Right lobe of liver (tissue), 6 donors: ENCODE measurements at regions of chr14 and their contacts with region 1.

Region 1: GRCh38 chr14:61894452-61895077 is 132.3 kb downstream of the SNAPC1 start:
- DNase-seq: peak; percentile 59 to 60 (median 59)
- ATAC-seq: peak; percentile 73 to 81 (median 74)
- H3K4me3 ChIP-seq: no peak overlapping the region
- H3K27ac ChIP-seq: no peak overlapping the region
- H3K4me1 ChIP-seq: no peaks in the 10 kb centered on the region
- H3K27me3 ChIP-seq: no peaks in the 10 kb centered on the region
- CTCF ChIP-seq: peak; percentile 39 to 72 (median 64)
- POLR2A ChIP-seq: no peak

Region 2: GRCh38 chr14:62138593-62138992 is 244.0 kb after region 1 on chr14:
- intact Hi-C with region 1: loop called in 1 of 2 experiments (anchors 10 kb)
- DNase-seq: no peak
- ATAC-seq: no peak
- H3K4me3 ChIP-seq: no peak overlapping the region
- H3K27ac ChIP-seq: no peak overlapping the region
- H3K4me1 ChIP-seq: no peaks in the 10 kb centered on the region
- H3K27me3 ChIP-seq: no peaks in the 10 kb centered on the region
- CTCF ChIP-seq: no peak
- POLR2A ChIP-seq: no peak